Mammary epithelial cell (primary cell): ENCODE measurements at regions of chrX and their contacts with region 1.

Region 1: GRCh38 chrX:100368167-100368566 is 41.9 kb downstream of the PCDH19 start:
- DNase-seq: peak; percentile 16
- H3K4me3 ChIP-seq: no peak overlapping the region
- H3K27ac ChIP-seq: no peak overlapping the region
- H3K4me1 ChIP-seq: no peaks in the 10 kb centered on the region
- H3K27me3 ChIP-seq: peaks cover 8% of the 10 kb centered on the region
- CTCF ChIP-seq: peak; percentile 64 to 74

Region 2: DNA sequence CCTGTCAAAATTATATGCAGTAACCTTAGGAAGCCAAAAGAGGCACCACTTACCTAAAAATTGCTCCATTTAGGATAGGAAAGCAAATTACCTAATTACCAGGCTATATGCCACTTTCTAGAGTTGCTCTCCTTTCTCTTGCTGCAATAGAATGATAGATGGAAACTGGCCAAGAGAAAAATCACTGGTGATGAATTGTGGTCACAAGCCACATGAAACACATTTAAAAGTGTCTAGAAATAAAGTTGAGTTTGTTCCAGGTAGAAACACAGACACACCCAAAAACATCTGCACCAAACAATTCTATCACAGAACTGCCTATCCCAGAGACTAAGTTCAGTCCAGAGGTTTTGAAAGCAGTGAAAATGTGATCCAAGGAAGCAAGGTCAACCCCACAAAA is 295.8 kb before region 1 on chrX:
- CTCF ChIA-PET with region 1: no interaction called
- dilution Hi-C with region 1: no loop called
- in situ Hi-C with region 1: no loop called
- intact Hi-C with region 1: loop called (anchors 1 kb)
- DNase-seq: peak; percentile 73
- H3K4me3 ChIP-seq: no peak overlapping the region
- H3K27ac ChIP-seq: no peak overlapping the region
- H3K4me1 ChIP-seq: no peaks in the 10 kb centered on the region
- H3K27me3 ChIP-seq: peaks cover 2% of the 10 kb centered on the region
- CTCF ChIP-seq: peak; percentile 37

Region 3: GRCh38 chrX:100277231-100277630 is 90.9 kb before region 1 on chrX:
- CTCF ChIA-PET with region 1: no interaction called
- dilution Hi-C with region 1: no loop called
- in situ Hi-C with region 1: no loop called
- intact Hi-C with region 1: no loop called
- DNase-seq: no peak
- H3K4me3 ChIP-seq: no peak overlapping the region
- H3K27ac ChIP-seq: no peak overlapping the region
- H3K4me1 ChIP-seq: no peaks in the 10 kb centered on the region
- H3K27me3 ChIP-seq: no peaks in the 10 kb centered on the region
- CTCF ChIP-seq: no peak

Region 4: GRCh38 chrX:100379388-100379986 is 11.3 kb after region 1 on chrX:
- CTCF ChIA-PET with region 1: interaction called, 6 read pairs
- dilution Hi-C with region 1: no loop called
- in situ Hi-C with region 1: no loop called
- intact Hi-C with region 1: loop called (anchors 1 kb)
- DNase-seq: peak; percentile 36
- H3K4me3 ChIP-seq: no peak overlapping the region
- H3K27ac ChIP-seq: no peak overlapping the region
- H3K4me1 ChIP-seq: no peaks in the 10 kb centered on the region
- H3K27me3 ChIP-seq: no peaks in the 10 kb centered on the region
- CTCF ChIP-seq: peak; percentile 69 to 70

Region 5: GRCh38 chrX:100413229-100413628 is 45.1 kb after region 1 on chrX:
- CTCF ChIA-PET with region 1: interaction called, 17 read pairs
- dilution Hi-C with region 1: no loop called
- in situ Hi-C with region 1: no loop called
- intact Hi-C with region 1: loop called (anchors 1 kb)
- DNase-seq: peak; percentile 43
- H3K4me3 ChIP-seq: no peak overlapping the region
- H3K27ac ChIP-seq: no peak overlapping the region
- H3K4me1 ChIP-seq: no peaks in the 10 kb centered on the region
- H3K27me3 ChIP-seq: peaks cover 12% of the 10 kb centered on the region
- CTCF ChIP-seq: peak; percentile 28 to 59